CD4-positive, alpha-beta T cell (primary cell): ENCODE measurements at regions of chr19 and their contacts with region 1.

Region 1: GRCh38 chr19:19138169-19138981 is at the start of gene TMEM161A:
- DNase-seq: peak; percentile 90 to 98 (median 94)
- ATAC-seq: peak; percentile 99
- H3K4me3 ChIP-seq: peak within 1 kb of the TSS; percentile 93
- H3K4me3 Mint-ChIP-seq: peak within 1 kb of the TSS; percentile 95
- H3K27ac ChIP-seq: peak within 1 kb of the TSS in 1 of 2 donors; percentile 46
- H3K27ac Mint-ChIP-seq: peak within 1 kb of the TSS; percentile 65
- H3K4me1 ChIP-seq: peaks cover 31% of the 10 kb centered on the region
- H3K4me1 Mint-ChIP-seq: peaks cover 28% of the 10 kb centered on the region
- H3K27me3 ChIP-seq: no peaks in the 10 kb centered on the region
- H3K27me3 Mint-ChIP-seq: no peaks in the 10 kb centered on the region
- CTCF ChIP-seq: no peak
- total RNA-seq, gene TMEM161A: 8.2 to 10.9 TPM

Region 2: GRCh38 chr19:19033426-19034203 is 104.8 kb before region 1 on chr19 and contains the starts of genes ARMC6 and SUGP2:
- CTCF ChIA-PET with region 1: no interaction called
- POLR2A ChIA-PET with region 1: no interaction called
- intact Hi-C with region 1: loop called in 1 of 2 experiments (anchors 2 kb)
- DNase-seq: peak; percentile 77 to 96 (median 87)
- ATAC-seq: peak; percentile 71
- H3K4me3 ChIP-seq: peak within 1 kb of the TSS; percentile 86
- H3K4me3 Mint-ChIP-seq: peak within 1 kb of the TSS; percentile 99
- H3K27ac ChIP-seq: peak within 1 kb of the TSS; percentile 77 to 81
- H3K27ac Mint-ChIP-seq: peak within 1 kb of the TSS; percentile 88
- H3K4me1 ChIP-seq: peaks cover 42% of the 10 kb centered on the region
- H3K4me1 Mint-ChIP-seq: peaks cover 38% of the 10 kb centered on the region
- H3K27me3 ChIP-seq: no peaks in the 10 kb centered on the region
- H3K27me3 Mint-ChIP-seq: no peaks in the 10 kb centered on the region
- CTCF ChIP-seq: no peak
- total RNA-seq, gene ARMC6: 5.9 to 6.0 TPM
- total RNA-seq, gene SUGP2: 106 to 110 TPM

Region 3: DNA sequence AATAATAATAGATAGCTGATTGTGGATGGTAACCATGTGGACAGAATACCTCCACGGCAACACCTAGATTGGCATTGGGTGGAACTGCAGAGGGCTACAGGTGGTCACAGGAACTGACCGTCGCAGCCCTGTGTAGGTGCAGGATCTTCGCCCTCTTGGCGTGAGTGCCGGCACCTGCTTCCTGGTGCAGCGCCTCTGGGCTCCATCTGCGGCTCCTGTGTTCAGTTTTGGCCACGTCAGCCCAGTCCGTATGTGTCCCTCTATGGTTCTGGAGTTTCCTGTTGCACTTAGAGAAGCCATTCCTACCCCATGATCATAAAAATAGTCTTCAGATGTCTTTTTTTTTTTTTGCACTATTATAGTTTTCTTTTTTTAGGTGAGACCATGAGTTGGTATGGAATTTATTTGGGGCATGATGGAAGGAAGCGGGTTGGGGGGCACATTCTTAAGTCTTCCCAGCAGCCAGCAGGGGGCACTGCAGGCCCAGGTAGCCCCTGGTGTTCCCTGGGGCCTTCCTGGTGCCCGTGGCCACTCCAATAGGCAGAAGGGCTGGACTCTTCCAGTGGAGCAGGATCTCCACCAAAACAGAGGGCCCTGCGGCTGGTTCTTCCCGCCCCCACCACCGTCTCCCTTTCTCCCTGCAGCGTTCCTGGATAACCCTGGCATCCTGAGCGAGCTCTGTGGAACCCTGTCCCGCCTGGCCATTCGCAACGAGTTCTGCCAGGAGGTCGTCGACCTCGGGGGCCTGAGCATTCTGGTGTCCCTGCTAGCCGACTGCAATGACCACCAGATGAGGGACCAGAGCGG is 84.7 kb before region 1 on chr19:
- CTCF ChIA-PET with region 1: no interaction called
- POLR2A ChIA-PET with region 1: no interaction called
- intact Hi-C with region 1: loop called (anchors 1 kb)
- DNase-seq: peak; percentile 42 to 84 (median 62)
- ATAC-seq: peak; percentile 79
- H3K4me3 ChIP-seq: no peak overlapping the region
- H3K4me3 Mint-ChIP-seq: no peak overlapping the region
- H3K27ac ChIP-seq: no peak overlapping the region
- H3K27ac Mint-ChIP-seq: no peak overlapping the region
- H3K4me1 ChIP-seq: no peaks in the 10 kb centered on the region
- H3K4me1 Mint-ChIP-seq: no peaks in the 10 kb centered on the region
- H3K27me3 ChIP-seq: no peaks in the 10 kb centered on the region
- H3K27me3 Mint-ChIP-seq: no peaks in the 10 kb centered on the region
- CTCF ChIP-seq: peak; percentile 87

Region 4: GRCh38 chr19:19063183-19064097 is 74.9 kb before region 1 on chr19 and contains the start of gene SLC25A42:
- CTCF ChIA-PET with region 1: no interaction called
- POLR2A ChIA-PET with region 1: no interaction called
- intact Hi-C with region 1: loop called (anchors 1 to 2 kb)
- DNase-seq: peak; percentile 97 to 100 (median 99)
- ATAC-seq: peak; percentile 91
- H3K4me3 ChIP-seq: peak within 1 kb of the TSS; percentile 73
- H3K4me3 Mint-ChIP-seq: peak within 1 kb of the TSS; percentile 86
- H3K27ac ChIP-seq: peak within 1 kb of the TSS; percentile 44 to 61
- H3K27ac Mint-ChIP-seq: peak within 1 kb of the TSS; percentile 65
- H3K4me1 ChIP-seq: peaks cover 49% of the 10 kb centered on the region
- H3K4me1 Mint-ChIP-seq: peaks cover 35% of the 10 kb centered on the region
- H3K27me3 ChIP-seq: no peaks in the 10 kb centered on the region
- H3K27me3 Mint-ChIP-seq: no peaks in the 10 kb centered on the region
- CTCF ChIP-seq: no peak
- total RNA-seq, gene SLC25A42: 15.1 to 15.4 TPM

Region 5: GRCh38 chr19:19192078-19192882 is 53.9 kb after region 1 on chr19 and contains the starts of genes BORCS8 and RFXANK:
- CTCF ChIA-PET with region 1: no interaction called
- POLR2A ChIA-PET with region 1: no interaction called
- intact Hi-C with region 1: loop called in 1 of 2 experiments (anchors 5 kb)
- DNase-seq: peak; percentile 96 to 100 (median 98)
- ATAC-seq: peak; percentile 90
- H3K4me3 ChIP-seq: peak within 1 kb of the TSS; percentile 94
- H3K4me3 Mint-ChIP-seq: peak within 1 kb of the TSS; percentile 97
- H3K27ac ChIP-seq: peak within 1 kb of the TSS; percentile 100
- H3K27ac Mint-ChIP-seq: peak within 1 kb of the TSS; percentile 97
- H3K4me1 ChIP-seq: peaks cover 48% of the 10 kb centered on the region
- H3K4me1 Mint-ChIP-seq: peaks cover 56% of the 10 kb centered on the region
- H3K27me3 ChIP-seq: no peaks in the 10 kb centered on the region
- H3K27me3 Mint-ChIP-seq: no peaks in the 10 kb centered on the region
- CTCF ChIP-seq: no peak
- total RNA-seq, gene BORCS8: 12.0 to 15.0 TPM
- total RNA-seq, gene RFXANK: 36.3 to 37.2 TPM

Region 6: GRCh38 chr19:19238126-19238852 is 99.9 kb after region 1 on chr19:
- CTCF ChIA-PET with region 1: no interaction called
- POLR2A ChIA-PET with region 1: no interaction called
- intact Hi-C with region 1: no loop called
- DNase-seq: no peak
- ATAC-seq: no peak
- H3K4me3 ChIP-seq: no peak overlapping the region
- H3K4me3 Mint-ChIP-seq: no peak overlapping the region
- H3K27ac ChIP-seq: no peak overlapping the region
- H3K27ac Mint-ChIP-seq: no peak overlapping the region
- H3K4me1 ChIP-seq: no peaks in the 10 kb centered on the region
- H3K4me1 Mint-ChIP-seq: no peaks in the 10 kb centered on the region
- H3K27me3 ChIP-seq: peaks cover 0 to 8% of the 10 kb centered on the region in 2 experiments
- H3K27me3 Mint-ChIP-seq: peaks cover 23% of the 10 kb centered on the region
- CTCF ChIP-seq: no peak

Region 7: DNA sequence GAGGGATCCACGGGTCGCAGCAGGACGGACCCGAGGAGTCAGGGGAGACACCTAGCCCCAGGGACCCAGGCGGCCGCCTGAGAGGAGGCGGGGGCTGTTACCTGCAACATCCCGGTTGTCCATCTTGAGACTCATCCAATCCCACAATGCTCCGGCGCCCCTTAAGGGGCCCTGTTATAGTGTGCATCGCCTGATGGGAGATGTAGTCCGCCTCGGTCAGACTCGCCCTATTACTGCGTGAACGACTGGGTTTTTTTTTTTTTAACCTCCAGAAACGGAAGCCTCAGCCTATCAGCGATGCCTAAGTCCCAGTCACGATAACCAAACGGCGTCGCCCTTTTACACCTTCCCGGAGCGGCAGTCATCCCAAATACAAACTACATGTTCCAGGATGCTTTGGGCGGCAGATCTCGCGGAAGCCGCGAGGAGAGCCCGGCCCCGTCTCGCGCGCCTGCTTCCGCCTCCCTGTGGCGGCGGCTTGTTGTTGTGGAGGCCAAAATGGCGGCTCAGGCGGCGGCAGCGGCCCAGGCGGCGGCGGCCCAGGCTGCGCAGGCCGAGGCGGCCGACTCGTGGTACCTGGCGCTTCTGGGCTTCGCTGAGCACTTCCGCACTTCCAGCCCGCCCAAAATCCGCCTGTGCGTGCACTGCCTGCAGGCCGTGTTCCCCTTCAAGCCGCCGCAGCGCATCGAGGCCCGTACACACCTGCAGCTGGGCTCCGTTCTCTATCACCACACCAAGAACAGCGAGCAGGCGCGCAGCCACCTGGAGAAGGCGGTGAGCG is 182.2 kb after region 1 on chr19 and contains the starts of genes MAU2 and SUGP1:
- CTCF ChIA-PET with region 1: no interaction called
- POLR2A ChIA-PET with region 1: no interaction called
- intact Hi-C with region 1: loop called in 1 of 2 experiments (anchors 5 kb)
- DNase-seq: peak; percentile 81 to 96 (median 88)
- ATAC-seq: peak; percentile 88
- H3K4me3 ChIP-seq: peak within 1 kb of the TSS; percentile 71
- H3K4me3 Mint-ChIP-seq: peak within 1 kb of the TSS; percentile 100
- H3K27ac ChIP-seq: peak within 1 kb of the TSS; percentile 92 to 95
- H3K27ac Mint-ChIP-seq: peak within 1 kb of the TSS; percentile 99
- H3K4me1 ChIP-seq: peaks cover 57% of the 10 kb centered on the region
- H3K4me1 Mint-ChIP-seq: peaks cover 43% of the 10 kb centered on the region
- H3K27me3 ChIP-seq: no peaks in the 10 kb centered on the region
- H3K27me3 Mint-ChIP-seq: no peaks in the 10 kb centered on the region
- CTCF ChIP-seq: peak; percentile 16
- total RNA-seq, gene MAU2: 132 to 133 TPM
- total RNA-seq, gene SUGP1: 49.7 to 56.0 TPM